Naive thymus-derived CD4-positive, alpha-beta T cell (primary cell): ENCODE measurements at regions of chr1 and their contacts with region 1.

Region 1: GRCh38 chr1:116325922-116326321 is 47.1 kb upstream of the ATP1A1 start:
- DNase-seq: peak; percentile 14 to 84 (median 78)
- ATAC-seq: peak; percentile 92
- H3K4me3 ChIP-seq: peak overlapping the region; percentile 38
- H3K4me3 Mint-ChIP-seq: peak overlapping the region; percentile 25 to 83 (median 70)
- H3K27ac ChIP-seq: peak overlapping the region; percentile 73
- H3K27ac Mint-ChIP-seq: peak overlapping the region; percentile 90 to 98 (median 95)
- H3K4me1 ChIP-seq: peaks cover 48 to 88% of the 10 kb centered on the region in 2 donors
- H3K4me1 Mint-ChIP-seq: peaks cover 50 to 100% (median 93%) of the 10 kb centered on the region in 7 donors
- H3K27me3 ChIP-seq: no peaks in the 10 kb centered on the region
- H3K27me3 Mint-ChIP-seq: no peaks in the 10 kb centered on the region

Region 2: GRCh38 chr1:116151739-116152576 is 174.0 kb before region 1 on chr1:
- CTCF ChIA-PET with region 1: no interaction called
- POLR2A ChIA-PET with region 1: interaction called, 3 read pairs
- intact Hi-C with region 1: loop called in 1 of 2 experiments (anchors 5 kb)
- DNase-seq: peak; percentile 61 to 89 (median 76)
- ATAC-seq: peak; percentile 97
- H3K4me3 ChIP-seq: peak overlapping the region; percentile 48
- H3K4me3 Mint-ChIP-seq: peak overlapping the region; percentile 70 to 87 (median 82)
- H3K27ac ChIP-seq: peak overlapping the region; percentile 74
- H3K27ac Mint-ChIP-seq: peak overlapping the region; percentile 63 to 98 (median 92)
- H3K4me1 ChIP-seq: peaks cover 7 to 21% of the 10 kb centered on the region in 2 donors
- H3K4me1 Mint-ChIP-seq: peaks cover 9 to 32% (median 25%) of the 10 kb centered on the region in 7 donors
- H3K27me3 ChIP-seq: no peaks in the 10 kb centered on the region
- H3K27me3 Mint-ChIP-seq: peaks cover 0 to 31% (median 0%) of the 10 kb centered on the region in 5 donors

Region 3: DNA sequence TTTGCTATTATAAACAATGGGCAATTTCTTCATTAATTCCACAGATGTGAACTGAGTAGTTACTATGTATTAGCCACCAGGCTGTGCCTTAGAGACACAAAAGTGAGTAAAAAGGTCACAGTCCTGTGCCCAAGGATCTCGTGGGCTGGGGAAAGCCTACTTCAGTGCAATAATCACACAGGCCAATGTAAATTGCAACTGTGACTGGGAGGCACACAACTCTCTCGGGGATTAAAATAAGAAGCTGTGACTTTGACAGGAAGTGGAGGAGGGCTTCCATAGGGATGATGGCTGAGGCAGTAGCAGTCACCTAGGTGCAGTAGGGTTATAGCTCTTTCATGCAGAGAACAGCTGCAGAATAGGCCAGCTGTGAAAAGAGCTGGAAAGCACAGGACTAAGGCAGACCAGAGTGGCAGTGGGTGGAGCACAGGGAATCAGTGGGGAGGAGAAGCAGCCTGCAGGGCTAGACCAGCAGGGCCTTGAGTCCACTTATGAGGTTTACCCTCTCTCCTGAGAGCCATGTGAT is 92.9 kb before region 1 on chr1:
- CTCF ChIA-PET with region 1: interaction called, 4 read pairs
- POLR2A ChIA-PET with region 1: interaction called, 5 read pairs
- intact Hi-C with region 1: loop called in 1 of 2 experiments (anchors 1 kb)
- DNase-seq: peak in 7 of 9 donors; percentile 29 to 66 (median 52)
- ATAC-seq: peak; percentile 82
- H3K4me3 ChIP-seq: no peak overlapping the region
- H3K4me3 Mint-ChIP-seq: peak overlapping the region in 6 of 10 donors; percentile 1 to 73 (median 26)
- H3K27ac ChIP-seq: no peak overlapping the region
- H3K27ac Mint-ChIP-seq: peak overlapping the region in 7 of 9 donors; percentile 5 to 90 (median 69)
- H3K4me1 ChIP-seq: peaks cover 4 to 10% of the 10 kb centered on the region in 2 donors
- H3K4me1 Mint-ChIP-seq: peaks cover 6 to 29% (median 25%) of the 10 kb centered on the region in 7 donors
- H3K27me3 ChIP-seq: no peaks in the 10 kb centered on the region
- H3K27me3 Mint-ChIP-seq: peaks cover 0 to 19% (median 0%) of the 10 kb centered on the region in 5 donors

Region 4: GRCh38 chr1:116277840-116278540 is 47.9 kb before region 1 on chr1:
- CTCF ChIA-PET with region 1: no interaction called
- POLR2A ChIA-PET with region 1: no interaction called
- intact Hi-C with region 1: no loop called
- DNase-seq: no peak
- ATAC-seq: no peak
- H3K4me3 ChIP-seq: no peak overlapping the region
- H3K4me3 Mint-ChIP-seq: no peak overlapping the region
- H3K27ac ChIP-seq: no peak overlapping the region
- H3K27ac Mint-ChIP-seq: peak overlapping the region in 1 of 9 donors; percentile 27
- H3K4me1 ChIP-seq: no peaks in the 10 kb centered on the region
- H3K4me1 Mint-ChIP-seq: peaks cover 0 to 25% (median 10%) of the 10 kb centered on the region in 7 donors
- H3K27me3 ChIP-seq: no peaks in the 10 kb centered on the region
- H3K27me3 Mint-ChIP-seq: peaks cover 0 to 34% (median 0%) of the 10 kb centered on the region in 5 donors

Region 5: DNA sequence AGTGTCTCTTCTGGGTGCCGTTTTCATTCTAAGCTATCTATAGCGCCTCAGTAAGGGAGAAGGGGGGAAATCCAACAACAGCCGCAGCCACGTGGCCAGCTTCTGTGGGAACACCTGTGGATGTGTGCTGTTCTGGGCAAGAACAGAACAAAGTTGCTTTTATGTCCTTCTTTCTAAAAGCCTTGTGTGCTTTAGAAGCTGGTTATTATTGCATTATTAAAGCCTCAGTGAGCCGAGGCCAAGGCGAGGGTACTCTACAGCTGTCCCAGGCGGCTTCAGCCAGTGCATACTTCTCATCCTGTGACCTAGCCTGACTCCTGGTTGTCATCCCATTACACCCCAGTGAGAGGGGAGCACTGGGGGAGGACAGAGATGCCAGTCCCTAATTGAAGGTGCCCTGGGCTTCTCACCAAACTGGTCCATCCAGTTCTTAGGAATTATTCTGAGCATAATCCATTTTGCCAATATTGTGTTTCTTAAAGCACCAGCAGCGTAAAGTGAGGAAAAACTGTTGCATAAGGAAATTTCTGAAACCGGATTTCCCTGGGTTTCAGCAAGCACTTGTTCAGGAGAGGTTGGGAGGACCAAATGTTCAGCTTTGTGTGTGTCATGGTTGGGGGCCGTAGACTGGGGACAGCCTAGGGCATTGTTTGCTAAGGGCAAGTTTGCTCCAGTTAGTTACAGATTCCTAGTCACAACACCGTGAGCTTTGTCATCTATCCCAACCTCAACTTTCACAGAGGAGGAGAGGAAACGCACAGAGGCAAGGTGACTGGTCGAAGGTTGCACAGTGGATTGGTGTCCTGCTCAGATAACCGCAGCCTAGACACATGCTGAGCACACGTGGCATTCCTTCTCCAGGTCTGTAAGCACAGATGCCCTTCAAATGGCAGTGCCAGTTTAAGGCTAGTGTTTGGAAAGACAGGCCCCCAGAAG is 13.9 kb before region 1 on chr1:
- CTCF ChIA-PET with region 1: interaction called, 3 read pairs
- POLR2A ChIA-PET with region 1: interaction called, 15 read pairs
- intact Hi-C with region 1: loop called in 1 of 2 experiments (anchors 2 kb)
- DNase-seq: no peak
- ATAC-seq: no peak
- H3K4me3 ChIP-seq: no peak overlapping the region
- H3K4me3 Mint-ChIP-seq: no peak overlapping the region
- H3K27ac ChIP-seq: no peak overlapping the region
- H3K27ac Mint-ChIP-seq: peak overlapping the region in 1 of 9 donors; percentile 59
- H3K4me1 ChIP-seq: peaks cover 0 to 14% of the 10 kb centered on the region in 2 donors
- H3K4me1 Mint-ChIP-seq: peaks cover 7 to 69% (median 47%) of the 10 kb centered on the region in 7 donors
- H3K27me3 ChIP-seq: no peaks in the 10 kb centered on the region
- H3K27me3 Mint-ChIP-seq: no peaks in the 10 kb centered on the region

Region 6: GRCh38 chr1:116345843-116346242 is 19.9 kb after region 1 on chr1:
- CTCF ChIA-PET with region 1: interaction called, 4 read pairs
- POLR2A ChIA-PET with region 1: interaction called, 13 read pairs
- intact Hi-C with region 1: loop called in 1 of 2 experiments (anchors 1 kb)
- DNase-seq: peak in 8 of 9 donors; percentile 17 to 89 (median 86)
- ATAC-seq: peak; percentile 93
- H3K4me3 ChIP-seq: no peak overlapping the region
- H3K4me3 Mint-ChIP-seq: peak overlapping the region in 9 of 10 donors; percentile 18 to 77 (median 70)
- H3K27ac ChIP-seq: peak overlapping the region; percentile 72
- H3K27ac Mint-ChIP-seq: peak overlapping the region in 8 of 9 donors; percentile 89 to 98 (median 92)
- H3K4me1 ChIP-seq: peaks cover 9 to 83% of the 10 kb centered on the region in 2 donors
- H3K4me1 Mint-ChIP-seq: peaks cover 10 to 93% (median 89%) of the 10 kb centered on the region in 7 donors
- H3K27me3 ChIP-seq: no peaks in the 10 kb centered on the region
- H3K27me3 Mint-ChIP-seq: peaks cover 0 to 3% (median 0%) of the 10 kb centered on the region in 5 donors

Region 7: GRCh38 chr1:116418091-116418830 is 92.3 kb after region 1 on chr1:
- CTCF ChIA-PET with region 1: no interaction called
- POLR2A ChIA-PET with region 1: interaction called, 14 read pairs
- intact Hi-C with region 1: loop called in 1 of 2 experiments (anchors 2 kb)
- DNase-seq: peak; percentile 76 to 90 (median 88)
- ATAC-seq: peak; percentile 97
- H3K4me3 ChIP-seq: peak overlapping the region; percentile 97
- H3K4me3 Mint-ChIP-seq: peak overlapping the region; percentile 85 to 95 (median 90)
- H3K27ac ChIP-seq: peak overlapping the region; percentile 87
- H3K27ac Mint-ChIP-seq: peak overlapping the region; percentile 83 to 98 (median 95)
- H3K4me1 ChIP-seq: peaks cover 12 to 18% of the 10 kb centered on the region in 2 donors
- H3K4me1 Mint-ChIP-seq: peaks cover 22 to 52% (median 47%) of the 10 kb centered on the region in 7 donors
- H3K27me3 ChIP-seq: no peaks in the 10 kb centered on the region
- H3K27me3 Mint-ChIP-seq: peaks cover 0 to 15% (median 0%) of the 10 kb centered on the region in 5 donors